Aorta (tissue), 5 donors: ENCODE measurements at regions of chr3 and their contacts with region 1.

Region 1: GRCh38 chr3:56876916-56877315 is 75.2 kb upstream of the ARHGEF3 start:
- DNase-seq: no peak
- ATAC-seq: no peak
- H3K4me3 ChIP-seq: no peak overlapping the region
- H3K27ac ChIP-seq: no peak overlapping the region
- H3K4me1 ChIP-seq: peaks cover 0 to 2% of the 10 kb centered on the region in 2 donors
- H3K27me3 ChIP-seq: no peaks in the 10 kb centered on the region

Region 2: DNA sequence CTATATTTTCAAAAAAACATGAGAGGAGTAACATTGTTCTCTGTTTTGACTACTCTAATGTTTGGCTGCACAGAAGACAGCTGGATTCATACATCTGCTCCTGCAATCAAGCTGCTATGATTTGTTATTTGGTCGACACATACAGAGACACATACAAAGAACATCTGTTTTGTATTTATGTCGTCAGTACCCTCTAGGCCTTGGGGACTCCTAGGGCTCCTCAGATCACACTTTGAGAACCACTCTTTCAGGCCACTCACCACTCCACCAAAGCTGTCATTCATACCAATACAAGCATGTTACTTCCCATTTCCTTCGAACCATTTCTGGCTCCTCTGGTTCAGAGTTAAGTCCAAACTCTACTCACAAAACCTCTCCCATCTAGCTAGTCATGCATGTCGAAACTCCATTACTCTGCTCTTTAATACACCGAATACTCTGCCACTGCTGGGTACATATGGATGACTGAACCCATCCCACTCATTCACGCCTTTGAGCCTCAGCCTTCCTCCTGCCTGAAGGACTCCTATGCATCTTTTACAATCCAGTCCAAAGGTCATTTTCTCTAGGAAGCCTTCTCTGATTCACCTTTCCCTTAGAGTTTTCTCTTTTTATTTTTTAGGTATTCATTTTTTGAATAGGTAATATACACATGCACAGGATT is 27.8 kb after region 1 on chr3:
- intact Hi-C with region 1: loop called in 1 of 2 experiments (anchors 2 kb)
- DNase-seq: no peak
- ATAC-seq: no peak
- H3K4me3 ChIP-seq: no peak overlapping the region
- H3K27ac ChIP-seq: no peak overlapping the region
- H3K4me1 ChIP-seq: no peaks in the 10 kb centered on the region
- H3K27me3 ChIP-seq: no peaks in the 10 kb centered on the region